GM18951 (cell line): ENCODE measurements at regions of chr6 and their contacts with region 1.

Region 1: DNA sequence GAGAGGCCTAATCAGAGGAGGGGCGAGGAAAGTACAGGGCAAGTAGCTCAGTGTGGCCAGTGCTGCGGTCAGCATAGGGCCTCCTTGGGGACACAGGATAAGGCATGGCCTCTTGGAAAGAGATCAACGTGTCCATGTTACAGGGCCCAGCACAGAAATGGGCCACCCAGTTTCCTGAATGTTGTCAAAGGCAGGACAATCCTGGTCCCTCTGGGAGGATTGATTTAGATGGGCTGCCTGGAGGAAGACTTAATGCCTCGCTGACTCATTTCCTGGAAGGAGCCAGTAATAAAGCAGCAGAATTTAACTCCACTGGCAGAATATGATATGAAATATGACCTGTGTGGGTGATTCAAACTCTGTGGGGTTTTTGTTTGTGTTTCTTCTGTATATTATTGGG is 16.6 kb downstream of the DDO start:
- POLR2A ChIP-seq: no peak

Region 2: GRCh38 chr6:109526905-109527628 is 871.7 kb before region 1 on chr6:
- in situ Hi-C with region 1: loop called (anchors 25 kb)
- POLR2A ChIP-seq: no peak

Region 3: DNA sequence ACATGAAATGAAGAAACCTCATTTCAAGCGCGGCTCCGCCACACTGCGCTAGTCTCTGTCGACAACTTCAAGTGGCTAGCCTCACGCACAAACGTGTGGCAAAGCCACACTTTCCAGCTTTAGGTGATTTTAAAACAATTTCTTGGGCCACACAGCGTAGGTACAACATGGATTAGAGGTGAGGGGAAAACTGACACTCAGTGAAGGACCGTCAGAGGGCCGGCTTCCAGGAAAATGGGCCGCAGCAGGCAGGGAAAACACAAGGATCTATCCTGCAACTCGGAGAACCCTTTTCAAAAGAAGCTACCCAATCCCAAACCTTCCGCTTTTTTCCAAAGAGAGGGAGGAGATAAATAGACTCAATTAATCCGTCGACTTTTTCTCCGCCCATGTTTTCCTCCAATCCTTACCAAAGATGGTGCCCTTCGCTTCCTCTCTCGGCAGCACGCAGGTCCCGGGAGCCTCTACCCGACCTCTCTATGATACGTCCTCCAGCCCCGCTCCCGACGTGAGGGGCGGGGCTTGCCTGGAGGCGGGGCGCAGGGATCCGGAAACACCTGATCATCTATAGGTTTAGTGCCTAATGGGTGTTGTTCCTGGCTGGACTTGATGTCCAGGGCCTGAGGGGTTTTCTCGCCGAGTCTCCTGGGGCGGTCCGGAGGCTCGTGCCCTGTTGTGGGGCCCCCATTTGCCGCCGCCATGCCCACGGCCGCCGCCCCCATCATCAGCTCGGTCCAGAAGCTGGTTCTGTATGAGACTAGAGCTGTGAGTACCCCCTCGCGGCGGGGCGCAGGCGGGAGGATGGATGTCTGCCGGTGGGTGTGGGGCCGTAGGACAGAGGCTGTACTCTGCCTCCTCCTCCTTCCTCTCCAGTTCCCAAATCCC is 707.8 kb before region 1 on chr6 and contains the starts of genes AK9 and FIG4:
- in situ Hi-C with region 1: loop called (anchors 10 kb)
- POLR2A ChIP-seq: peak; percentile 71